Activated CD8-positive, alpha-beta T cell treated with anti-CD3 and anti-CD28 coated beads, Interleukin-2, amount 10 ng/mL, durations not matched to agents 7 days and 5 days (primary cell): ENCODE measurements at regions of chr2 and their contacts with region 1.

Region 1: GRCh38 chr2:113965644-113966043 is 75.8 kb downstream of the ACTR3 start:
- DNase-seq: peak; percentile 48
- ATAC-seq: peak; percentile 72
- H3K4me3 Mint-ChIP-seq: no peak overlapping the region
- H3K27ac Mint-ChIP-seq: no peak overlapping the region
- H3K4me1 Mint-ChIP-seq: no peaks in the 10 kb centered on the region
- H3K27me3 Mint-ChIP-seq: no peaks in the 10 kb centered on the region

Region 2: DNA sequence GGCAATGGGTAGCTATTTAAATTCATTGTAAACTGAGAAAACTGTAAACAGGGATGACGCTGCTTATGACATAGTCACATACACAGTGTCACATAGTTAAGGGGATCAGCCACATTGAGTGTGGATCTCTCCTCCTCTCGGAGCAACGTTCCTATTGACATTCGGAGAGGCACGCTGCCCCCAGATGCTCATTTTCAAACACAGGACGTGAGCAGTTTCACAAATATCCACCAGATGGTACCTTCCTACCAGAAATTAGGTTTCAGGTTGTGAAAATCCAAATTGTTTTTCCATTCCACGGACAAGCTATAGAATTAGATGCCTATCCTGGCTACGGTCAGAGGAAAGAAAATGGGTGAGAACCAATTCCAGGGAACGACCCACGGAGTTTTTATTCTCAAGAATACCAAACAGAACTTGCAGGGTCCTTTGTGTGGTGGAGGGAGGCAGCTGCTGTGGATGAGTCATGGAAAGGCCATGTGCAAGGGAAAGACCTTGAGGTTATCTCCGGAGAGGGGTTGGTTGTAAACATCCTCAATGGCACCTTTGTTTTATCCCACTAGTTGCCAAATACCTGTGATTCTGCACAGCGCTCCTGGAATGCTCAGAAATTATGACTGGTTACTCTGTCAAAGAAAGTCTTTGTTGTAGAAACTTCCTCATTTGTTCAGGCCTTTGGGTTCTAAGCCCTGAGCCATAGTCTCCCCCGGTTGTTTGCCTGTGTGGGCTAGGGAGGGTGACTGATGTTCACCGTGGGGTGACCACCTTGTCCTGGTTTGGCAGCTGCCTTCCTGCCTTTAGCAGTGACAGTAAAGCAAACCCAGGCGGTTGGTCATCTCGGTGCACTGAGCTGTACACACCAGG is 12.2 kb after region 1 on chr2:
- CTCF ChIA-PET with region 1: interaction called, 18 read pairs
- POLR2A ChIA-PET with region 1: no interaction called
- DNase-seq: no peak
- ATAC-seq: no peak
- H3K4me3 Mint-ChIP-seq: no peak overlapping the region
- H3K27ac Mint-ChIP-seq: no peak overlapping the region
- H3K4me1 Mint-ChIP-seq: peaks cover 15% of the 10 kb centered on the region
- H3K27me3 Mint-ChIP-seq: no peaks in the 10 kb centered on the region

Region 3: DNA sequence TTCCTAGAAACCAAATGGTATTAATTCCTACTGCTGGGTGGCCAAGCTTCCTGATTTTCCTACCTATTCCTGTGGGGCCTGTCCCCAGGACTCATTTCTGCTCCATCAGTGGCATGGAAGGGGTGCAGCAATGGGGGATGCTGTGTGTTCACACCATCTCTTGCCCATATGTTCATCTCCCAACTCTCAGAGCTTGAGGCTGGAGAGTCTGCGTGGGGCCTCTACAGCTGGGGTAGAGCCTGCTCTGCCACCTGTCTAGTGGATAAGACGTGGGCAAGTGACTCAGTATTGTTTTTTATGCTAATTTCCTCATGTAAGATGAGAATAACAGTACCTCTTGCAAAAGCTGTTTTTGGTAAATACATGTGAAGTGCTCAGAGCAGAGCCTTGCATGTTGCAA is 74.0 kb after region 1 on chr2:
- CTCF ChIA-PET with region 1: no interaction called
- POLR2A ChIA-PET with region 1: no interaction called
- DNase-seq: no peak
- ATAC-seq: no peak
- H3K4me3 Mint-ChIP-seq: no peak overlapping the region
- H3K27ac Mint-ChIP-seq: no peak overlapping the region
- H3K4me1 Mint-ChIP-seq: no peaks in the 10 kb centered on the region
- H3K27me3 Mint-ChIP-seq: peaks cover 12% of the 10 kb centered on the region